Activated CD4-positive, alpha-beta T cell treated with anti-CD3 and anti-CD28 coated beads, Interleukin-2, amount 10 ng/mL, durations not matched to agents 24 days and 14 days (primary cell): ENCODE measurements at regions of chr11 and their contacts with region 1.

Region 1: GRCh38 chr11:109946322-109946846 is 146.8 kb upstream of the ZC3H12C start:
- DNase-seq: peak; percentile 89
- H3K4me3 Mint-ChIP-seq: peak overlapping the region; percentile 34
- H3K27ac Mint-ChIP-seq: peak overlapping the region; percentile 17
- H3K4me1 Mint-ChIP-seq: peaks cover 10% of the 10 kb centered on the region
- H3K27me3 Mint-ChIP-seq: peaks cover 17% of the 10 kb centered on the region

Region 2: DNA sequence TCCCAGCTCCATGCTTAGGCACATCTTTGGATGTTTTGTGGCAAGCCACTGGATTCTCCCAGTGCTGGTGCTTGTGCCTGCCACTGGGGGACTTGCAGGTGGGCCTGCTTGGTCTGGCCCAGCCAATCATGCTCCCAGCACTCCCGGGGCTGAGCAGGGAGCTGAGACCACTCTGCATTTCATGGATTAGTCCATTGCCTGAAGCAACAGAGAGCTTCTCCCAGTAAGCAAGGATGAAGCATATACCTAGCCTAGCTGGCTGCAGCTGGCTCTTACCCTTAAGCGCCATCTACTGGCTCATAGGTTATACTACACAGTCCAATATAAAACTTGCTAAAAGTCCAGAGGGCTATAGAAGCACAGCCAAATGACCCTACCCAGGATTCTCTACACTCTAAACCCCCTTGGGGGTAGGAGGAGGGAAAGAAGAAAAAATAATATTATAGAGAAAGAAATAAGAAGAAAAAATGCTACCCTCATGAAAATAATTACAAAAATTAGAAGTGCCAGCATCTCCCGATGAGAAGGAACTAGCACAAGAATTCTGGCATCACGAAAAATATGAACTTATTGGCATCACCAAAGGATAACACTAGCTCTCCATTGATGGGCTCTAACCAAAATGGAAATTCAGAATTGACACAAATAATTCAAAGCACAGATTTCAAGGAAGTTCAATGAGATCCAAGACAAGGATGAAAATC is 249.1 kb before region 1 on chr11:
- intact Hi-C with region 1: no loop called
- DNase-seq: peak; percentile 64
- H3K4me3 Mint-ChIP-seq: no peak overlapping the region
- H3K27ac Mint-ChIP-seq: no peak overlapping the region
- H3K4me1 Mint-ChIP-seq: no peaks in the 10 kb centered on the region
- H3K27me3 Mint-ChIP-seq: no peaks in the 10 kb centered on the region

Region 3: GRCh38 chr11:109734566-109734965 is 211.8 kb before region 1 on chr11:
- intact Hi-C with region 1: no loop called
- DNase-seq: no peak
- H3K4me3 Mint-ChIP-seq: no peak overlapping the region
- H3K27ac Mint-ChIP-seq: no peak overlapping the region
- H3K4me1 Mint-ChIP-seq: no peaks in the 10 kb centered on the region
- H3K27me3 Mint-ChIP-seq: no peaks in the 10 kb centered on the region

Region 4: GRCh38 chr11:109984634-109985289 is 38.4 kb after region 1 on chr11:
- intact Hi-C with region 1: loop called (anchors 1 kb)
- DNase-seq: no peak
- H3K4me3 Mint-ChIP-seq: no peak overlapping the region
- H3K27ac Mint-ChIP-seq: no peak overlapping the region
- H3K4me1 Mint-ChIP-seq: peaks cover 13% of the 10 kb centered on the region
- H3K27me3 Mint-ChIP-seq: peaks cover 7% of the 10 kb centered on the region

Region 5: GRCh38 chr11:110077831-110078325 is 131.5 kb after region 1 on chr11:
- intact Hi-C with region 1: loop called (anchors 5 kb)
- DNase-seq: peak; percentile 80
- H3K4me3 Mint-ChIP-seq: peak overlapping the region; percentile 43
- H3K27ac Mint-ChIP-seq: peak overlapping the region; percentile 95
- H3K4me1 Mint-ChIP-seq: peaks cover 26% of the 10 kb centered on the region
- H3K27me3 Mint-ChIP-seq: peaks cover 5% of the 10 kb centered on the region

Region 6: GRCh38 chr11:110190885-110191284 is 244.5 kb after region 1 on chr11:
- intact Hi-C with region 1: loop called (anchors 5 kb)
- DNase-seq: no peak
- H3K4me3 Mint-ChIP-seq: no peak overlapping the region
- H3K27ac Mint-ChIP-seq: no peak overlapping the region
- H3K4me1 Mint-ChIP-seq: peaks cover 16% of the 10 kb centered on the region
- H3K27me3 Mint-ChIP-seq: peaks cover 45% of the 10 kb centered on the region